ENCODE measurements at regions of chr9 and their contacts with region 1.

Region 1: GRCh38 chr9:70484210-70485130 is 70.0 kb upstream of the KLF9 start:
- DNase-seq: no peak
- ATAC-seq: peak; percentile 71

Region 2: GRCh38 chr9:70413798-70414775 is 70.4 kb before region 1 on chr9 and contains the start of gene KLF9:
- intact Hi-C with region 1: loop called (anchors 2 kb)
- DNase-seq: peak; percentile 95
- ATAC-seq: peak; percentile 70
- total RNA-seq, gene KLF9: 50.9 TPM

Region 3: GRCh38 chr9:70419546-70420266 is 64.8 kb before region 1 on chr9:
- intact Hi-C with region 1: loop called (anchors 2 kb)
- DNase-seq: peak; percentile 98
- ATAC-seq: peak; percentile 71

Region 4: GRCh38 chr9:70602321-70603019 is 118.0 kb after region 1 on chr9:
- intact Hi-C with region 1: loop called (anchors 2 kb)
- DNase-seq: peak; percentile 51
- ATAC-seq: peak; percentile 75

Measured in Right ventricle myocardium superior (tissue), 1 donor.